ENCODE measurements at regions of chr2 and their contacts with region 1.

Region 1: DNA sequence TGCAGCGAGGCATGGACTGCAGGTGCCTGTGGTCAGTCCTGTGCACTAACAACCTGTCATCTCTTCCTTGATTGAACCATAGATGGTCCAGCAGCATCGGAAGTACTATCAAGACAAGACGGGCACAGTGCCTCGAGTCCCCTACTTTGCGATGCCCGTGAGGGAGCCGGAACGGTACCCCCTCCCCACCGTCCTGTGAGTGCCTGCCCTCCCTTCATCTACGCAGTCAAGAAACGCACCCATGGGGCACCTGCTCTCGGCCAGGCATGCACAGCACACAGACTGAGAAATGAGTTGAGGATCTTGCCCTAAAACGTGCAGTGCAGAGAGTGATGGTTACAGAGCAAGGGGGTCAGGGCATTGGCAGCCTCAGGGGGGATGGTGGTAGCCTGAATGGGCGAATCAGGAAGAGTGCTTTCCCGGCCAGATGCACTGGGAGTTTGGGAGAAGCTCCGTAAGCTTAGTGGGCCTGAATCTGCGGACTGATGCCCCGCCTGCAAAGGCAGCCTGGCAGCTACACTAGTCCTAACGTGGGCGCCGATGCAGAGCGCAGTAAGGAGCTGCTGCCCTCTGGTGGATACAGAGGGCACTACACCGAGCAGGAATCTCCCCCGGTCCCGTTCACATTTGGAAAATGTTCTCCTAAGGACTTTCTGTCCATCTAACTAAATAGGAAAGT is 63.6 kb downstream of the CIB4 start:
- H3K4me3 ChIP-seq: no peak overlapping the region
- H3K27ac ChIP-seq: no peak overlapping the region
- H3K4me1 ChIP-seq: no peaks in the 10 kb centered on the region
- CTCF ChIP-seq: peak; percentile 86

Region 2: GRCh38 chr2:26126074-26126473 is 451.5 kb before region 1 on chr2:
- CTCF ChIA-PET with region 1: no interaction called
- POLR2A ChIA-PET with region 1: no interaction called
- H3K4me3 ChIP-seq: no peak overlapping the region
- H3K27ac ChIP-seq: no peak overlapping the region
- H3K4me1 ChIP-seq: peaks cover 7% of the 10 kb centered on the region
- CTCF ChIP-seq: no peak

Region 3: GRCh38 chr2:26521054-26521912 is 56.3 kb before region 1 on chr2:
- CTCF ChIA-PET with region 1: interaction called, 37 read pairs
- POLR2A ChIA-PET with region 1: no interaction called
- H3K4me3 ChIP-seq: no peak overlapping the region
- H3K27ac ChIP-seq: no peak overlapping the region
- H3K4me1 ChIP-seq: no peaks in the 10 kb centered on the region
- CTCF ChIP-seq: peak; percentile 25; the same call in 1 of the 2 replicates

Region 4: GRCh38 chr2:26555246-26556133 is 22.1 kb before region 1 on chr2:
- CTCF ChIA-PET with region 1: interaction called, 11 read pairs
- POLR2A ChIA-PET with region 1: no interaction called
- H3K4me3 ChIP-seq: no peak overlapping the region
- H3K27ac ChIP-seq: no peak overlapping the region
- H3K4me1 ChIP-seq: no peaks in the 10 kb centered on the region
- CTCF ChIP-seq: no peak

Region 5: GRCh38 chr2:26591619-26592505 is 14.3 kb after region 1 on chr2:
- CTCF ChIA-PET with region 1: interaction called, 13 read pairs
- POLR2A ChIA-PET with region 1: no interaction called
- H3K4me3 ChIP-seq: no peak overlapping the region
- H3K27ac ChIP-seq: no peak overlapping the region
- H3K4me1 ChIP-seq: no peaks in the 10 kb centered on the region
- CTCF ChIP-seq: no peak

Region 6: GRCh38 chr2:26745609-26746327 is 168.2 kb after region 1 on chr2:
- CTCF ChIA-PET with region 1: interaction called, 28 read pairs
- POLR2A ChIA-PET with region 1: no interaction called
- H3K4me3 ChIP-seq: no peak overlapping the region
- H3K27ac ChIP-seq: no peak overlapping the region
- H3K4me1 ChIP-seq: no peaks in the 10 kb centered on the region
- CTCF ChIP-seq: peak; percentile 82